Spleen (tissue), 13 donors: ENCODE measurements at regions of chr5 and their contacts with region 1.

Region 1: GRCh38 chr5:80711938-80712337 is 57.2 kb upstream of the DHFR start:
- DNase-seq: no peak
- H3K4me3 ChIP-seq: no peak overlapping the region
- H3K27ac ChIP-seq: no peak overlapping the region
- H3K4me1 ChIP-seq: peaks cover 0 to 7% (median 0%) of the 10 kb centered on the region in 6 donors
- H3K27me3 ChIP-seq: no peaks in the 10 kb centered on the region
- CTCF ChIP-seq: peak in 5 of 11 experiments; percentile 9 to 26 (median 19)
- POLR2A ChIP-seq: no peak

Region 2: GRCh38 chr5:80884929-80885328 is 173.0 kb after region 1 on chr5:
- intact Hi-C with region 1: loop called (anchors 5 kb)
- DNase-seq: no peak
- H3K4me3 ChIP-seq: no peak overlapping the region
- H3K27ac ChIP-seq: no peak overlapping the region
- H3K4me1 ChIP-seq: peaks cover 0 to 7% (median 0%) of the 10 kb centered on the region in 6 donors
- H3K27me3 ChIP-seq: no peaks in the 10 kb centered on the region
- CTCF ChIP-seq: no peak
- POLR2A ChIP-seq: no peak